Adrenal gland (tissue), 19 donors: ENCODE measurements at regions of chr18 and their contacts with region 1.

Region 1: DNA sequence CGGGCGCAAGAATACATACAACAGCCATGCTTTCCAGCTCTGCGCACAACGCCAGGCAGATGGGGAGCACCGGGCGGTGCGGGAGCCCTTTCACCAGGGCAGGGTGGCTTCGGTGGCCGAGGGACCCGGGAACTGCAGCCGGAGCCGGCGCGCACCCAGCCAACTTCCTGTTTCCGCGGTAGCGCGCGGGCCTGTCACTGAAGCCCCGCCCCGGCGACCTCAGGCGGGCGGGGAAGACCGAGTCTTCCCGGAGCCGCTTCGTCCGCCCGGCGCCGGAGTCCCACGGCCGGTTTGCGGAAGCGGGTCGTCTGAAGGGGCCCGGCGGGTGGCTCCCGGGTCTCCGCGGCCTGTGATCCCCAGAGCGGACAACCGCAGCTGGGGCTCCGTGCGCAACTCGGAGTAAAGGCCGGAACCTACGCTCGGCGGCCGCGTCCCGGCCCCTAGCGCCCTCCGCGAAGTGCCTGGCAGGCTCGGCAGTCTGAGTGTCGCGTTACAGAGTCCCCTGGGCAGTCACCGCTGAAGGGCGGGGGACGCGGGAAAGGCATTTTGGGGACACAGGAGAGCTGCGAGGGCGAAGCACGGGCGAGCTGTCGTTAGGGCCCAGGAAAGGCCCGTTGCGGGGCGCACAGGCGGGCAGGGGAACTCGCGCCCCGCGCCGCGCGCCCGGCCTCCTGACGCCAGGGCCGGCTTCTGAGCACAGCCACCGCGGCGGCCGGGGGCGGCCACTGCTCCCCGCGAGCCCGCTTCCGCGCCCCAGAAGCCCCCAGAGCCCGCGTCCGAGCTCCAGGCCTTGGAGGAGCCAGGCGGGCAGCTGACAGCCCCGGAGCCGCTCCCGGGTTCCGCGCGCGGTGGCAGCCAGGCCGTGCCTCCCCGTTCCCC is at the start of gene MPPE1:
- DNase-seq: peak; percentile 85 to 93 (median 89)
- H3K4me3 ChIP-seq: peak within 1 kb of the TSS; percentile 16 to 89 (median 50)
- H3K27ac ChIP-seq: peak within 1 kb of the TSS; percentile 95 to 100 (median 96)
- H3K4me1 ChIP-seq: peaks cover 9 to 22% of the 10 kb centered on the region in 2 donors
- H3K27me3 ChIP-seq: no peaks in the 10 kb centered on the region
- CTCF ChIP-seq: no peak
- POLR2A ChIP-seq: peak in 1 of 2 donors; percentile 92
- total RNA-seq, gene MPPE1: 17.0 to 44.7 (median 33.0) TPM

Region 2: DNA sequence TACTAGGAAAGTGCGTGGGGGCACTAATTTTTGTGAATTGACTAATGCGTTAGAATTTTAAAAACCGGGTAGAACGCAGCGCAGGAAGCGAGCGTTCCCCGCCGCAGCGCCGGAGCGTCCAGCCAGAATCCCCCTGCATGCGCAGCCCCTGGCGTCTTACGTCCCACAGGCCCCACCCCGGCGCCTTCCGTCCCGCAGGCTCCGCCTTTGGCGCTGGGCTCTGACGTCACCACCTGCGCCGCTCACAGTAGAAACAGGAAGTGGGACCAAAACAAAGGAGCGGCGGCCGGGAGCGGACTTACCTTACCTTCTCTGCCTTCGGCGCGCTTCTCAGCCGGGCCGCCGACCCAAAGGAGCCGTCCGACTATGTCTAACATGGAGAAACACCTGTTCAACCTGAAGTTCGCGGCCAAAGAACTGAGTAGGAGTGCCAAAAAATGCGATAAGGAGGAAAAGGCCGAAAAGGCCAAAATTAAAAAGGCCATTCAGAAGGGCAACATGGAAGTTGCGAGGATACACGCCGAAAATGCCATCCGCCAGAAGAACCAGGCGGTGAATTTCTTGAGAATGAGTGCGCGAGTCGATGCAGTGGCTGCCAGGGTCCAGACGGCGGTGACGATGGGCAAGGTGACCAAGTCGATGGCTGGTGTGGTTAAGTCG is 57.1 kb before region 1 on chr18 and contains the start of gene CHMP1B:
- intact Hi-C with region 1: loop called in 1 of 2 experiments (anchors 10 kb)
- DNase-seq: peak; percentile 97 to 99 (median 98)
- H3K4me3 ChIP-seq: peak within 1 kb of the TSS; percentile 62 to 95 (median 80)
- H3K27ac ChIP-seq: peak within 1 kb of the TSS; percentile 79 to 95 (median 91)
- H3K4me1 ChIP-seq: peaks cover 6 to 24% of the 10 kb centered on the region in 2 donors
- H3K27me3 ChIP-seq: no peaks in the 10 kb centered on the region
- CTCF ChIP-seq: no peak
- POLR2A ChIP-seq: peak; percentile 95 to 98
- total RNA-seq, gene CHMP1B: 37.8 to 52.2 (median 42.8) TPM